ENCODE measurements at regions of chr6 and their contacts with region 1.

Region 1: DNA sequence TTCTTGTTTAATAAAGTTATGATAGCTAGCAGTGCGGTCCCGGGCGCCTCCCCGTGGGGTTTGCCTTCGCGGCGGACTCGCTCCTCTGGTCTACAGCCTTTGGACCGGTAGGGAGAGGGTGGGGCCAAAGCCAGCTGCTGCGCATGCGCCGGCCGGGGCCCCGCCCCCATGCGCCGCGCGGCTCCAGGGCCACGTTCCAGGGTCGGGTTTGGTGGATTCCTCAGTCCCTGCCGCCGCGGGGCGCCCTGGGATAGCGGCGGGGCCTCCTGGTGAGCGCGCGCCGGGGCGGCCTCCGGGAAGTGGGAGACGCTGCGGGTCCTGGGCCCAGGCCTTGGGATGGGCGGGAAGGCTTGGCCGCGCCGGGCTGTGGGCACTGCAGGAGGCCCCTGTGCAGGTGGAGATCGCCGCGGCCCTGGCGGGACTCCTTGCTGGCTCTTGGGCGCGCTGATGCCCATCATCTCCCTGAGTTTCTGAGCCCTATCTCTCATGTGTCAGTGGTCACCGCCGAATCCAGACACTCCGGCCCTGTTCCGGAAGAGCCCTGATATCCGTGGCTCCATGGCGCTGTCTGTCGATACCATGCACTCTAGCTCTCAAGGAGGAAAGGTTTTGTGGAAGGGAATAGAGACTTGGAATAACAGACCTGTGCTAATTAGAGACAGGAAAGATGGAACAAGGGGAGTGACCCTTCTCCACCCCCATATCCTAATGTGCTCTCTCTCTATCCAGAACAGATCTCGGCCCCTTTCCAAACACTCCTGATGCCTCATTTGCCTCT is at the start of gene VARS2:
- DNase-seq: peak; percentile 97
- H3K4me3 ChIP-seq: peak within 1 kb of the TSS; percentile 60 to 70 (median 66)
- H3K27ac ChIP-seq: peak within 1 kb of the TSS; percentile 85 to 97 (median 90)
- H3K4me1 ChIP-seq: peaks cover 19 to 33% (median 29%) of the 10 kb centered on the region in 4 donors
- H3K27me3 ChIP-seq: no peaks in the 10 kb centered on the region
- CTCF ChIP-seq: peak; percentile 36 to 69 (median 46)
- EP300 ChIP-seq: no peak
- POLR2A ChIP-seq: peak; percentile 74
- total RNA-seq, gene VARS2: 6.6 to 16.9 (median 12.6) TPM

Region 2: GRCh38 chr6:31079656-31080261 is 165.5 kb after region 1 on chr6:
- intact Hi-C with region 1: loop called (anchors 2 kb)
- DNase-seq: no peak
- H3K4me3 ChIP-seq: peak overlapping the region in 3 of 4 donors; percentile 20 to 46 (median 23)
- H3K27ac ChIP-seq: no peak overlapping the region
- H3K4me1 ChIP-seq: peaks cover 3 to 9% (median 6%) of the 10 kb centered on the region in 4 donors
- H3K27me3 ChIP-seq: peaks cover 0 to 6% (median 0%) of the 10 kb centered on the region in 4 donors
- CTCF ChIP-seq: peak; percentile 68 to 91 (median 70)
- EP300 ChIP-seq: no peak
- POLR2A ChIP-seq: no peak

Region 3: DNA sequence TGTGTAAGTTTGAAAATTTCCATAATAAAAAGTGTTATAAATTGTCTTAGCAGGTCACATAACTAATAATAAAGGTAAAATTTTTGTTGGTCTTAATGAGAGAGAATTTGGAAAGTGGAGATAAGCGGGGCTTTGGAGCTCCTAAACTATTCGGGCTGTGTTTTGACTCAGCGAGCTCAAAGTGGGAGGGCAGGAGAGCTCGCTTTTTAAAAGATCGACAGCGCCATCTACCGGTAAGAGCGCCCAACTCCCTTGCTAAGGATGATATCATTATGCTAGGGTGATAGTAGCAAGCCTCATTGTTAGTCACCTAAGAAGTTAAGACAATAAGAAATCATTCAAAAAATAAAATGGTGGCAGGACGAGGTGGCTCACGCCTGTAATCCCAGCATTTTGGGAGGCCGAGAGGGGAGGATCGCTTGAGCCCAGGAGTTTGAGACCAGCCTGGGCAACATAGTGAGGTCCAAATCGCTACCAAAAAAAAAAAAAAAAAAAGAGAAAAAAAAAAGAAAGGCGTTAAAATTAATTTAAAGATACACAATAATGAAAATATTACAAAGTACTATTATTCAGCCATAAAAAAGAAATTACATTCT is 173.3 kb after region 1 on chr6:
- intact Hi-C with region 1: loop called (anchors 5 kb)
- DNase-seq: no peak
- H3K4me3 ChIP-seq: no peak overlapping the region
- H3K27ac ChIP-seq: no peak overlapping the region
- H3K4me1 ChIP-seq: peaks cover 0 to 11% (median 5%) of the 10 kb centered on the region in 4 donors
- H3K27me3 ChIP-seq: no peaks in the 10 kb centered on the region
- CTCF ChIP-seq: peak; percentile 80 to 87 (median 84)
- EP300 ChIP-seq: no peak
- POLR2A ChIP-seq: no peak

Measured in esophagus muscularis mucosa (tissue), 4 donors.